ENCODE measurements at regions of chr3 and their contacts with region 1.

Region 1: GRCh38 chr3:79497447-79498111 is 270.2 kb downstream of the ROBO1 start:
- DNase-seq: no peak
- H3K4me3 ChIP-seq: no peak overlapping the region
- H3K27ac ChIP-seq: no peak overlapping the region
- H3K4me1 ChIP-seq: no peaks in the 10 kb centered on the region
- H3K27me3 ChIP-seq: no peaks in the 10 kb centered on the region
- CTCF ChIP-seq: peak; percentile 66 to 67

Region 2: DNA sequence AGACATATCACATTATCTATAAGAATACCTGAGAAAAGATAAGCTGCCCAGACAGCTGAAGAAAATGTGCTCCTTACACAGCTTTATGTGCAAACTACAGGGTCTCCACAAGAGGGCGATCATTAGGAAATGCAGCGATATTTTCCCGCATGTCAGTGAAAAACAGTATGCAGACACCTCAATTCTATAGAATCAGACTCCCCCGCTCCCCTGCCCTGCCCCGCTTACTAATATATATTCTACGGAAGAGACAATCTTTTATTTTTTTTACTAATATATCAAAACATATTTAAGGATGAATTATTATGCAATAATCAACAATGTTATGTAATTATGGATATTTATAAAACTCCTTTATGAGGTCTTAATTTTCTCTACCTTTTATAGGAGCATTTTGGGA is 411.1 kb before region 1 on chr3:
- CTCF ChIA-PET with region 1: no interaction called
- dilution Hi-C with region 1: no loop called
- in situ Hi-C with region 1: loop called (anchors 10 to 25 kb)
- intact Hi-C with region 1: loop called (anchors 1 kb)
- DNase-seq: peak; percentile 43
- H3K4me3 ChIP-seq: no peak overlapping the region
- H3K27ac ChIP-seq: no peak overlapping the region
- H3K4me1 ChIP-seq: no peaks in the 10 kb centered on the region
- H3K27me3 ChIP-seq: peaks cover 2% of the 10 kb centered on the region
- CTCF ChIP-seq: peak; percentile 85 to 88

Region 3: DNA sequence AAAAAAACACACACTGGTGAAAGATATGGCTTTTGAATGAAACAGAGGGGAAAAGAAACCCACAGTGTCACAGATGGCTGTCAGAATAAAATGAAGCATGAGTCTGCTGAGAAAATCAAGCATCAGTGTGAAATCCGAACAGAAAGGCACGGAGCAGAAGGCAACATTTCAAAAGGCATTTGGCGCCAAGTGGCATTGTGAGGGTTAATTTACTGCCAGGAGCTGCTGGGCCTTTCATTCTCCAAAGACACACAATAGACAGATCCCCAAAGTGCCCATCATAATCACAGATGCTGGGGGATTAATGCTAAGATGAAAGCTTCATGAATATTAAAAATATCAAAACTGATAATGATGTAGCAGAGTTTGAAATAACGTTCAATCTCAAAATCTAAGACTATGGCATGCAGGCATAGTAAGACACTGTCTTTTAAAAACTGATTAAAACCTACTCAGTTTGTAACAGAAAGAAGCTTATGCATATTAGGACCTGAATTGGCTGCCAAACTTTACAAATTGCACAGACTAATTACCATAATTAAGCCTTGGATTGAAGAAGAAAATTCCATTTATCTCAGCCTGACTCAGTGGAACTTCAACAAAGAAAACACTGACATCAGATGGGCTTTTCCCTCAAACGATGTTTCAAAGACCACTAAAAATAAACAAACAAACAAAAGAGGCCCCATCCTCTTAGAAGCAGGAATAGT is 319.0 kb before region 1 on chr3:
- CTCF ChIA-PET with region 1: no interaction called
- dilution Hi-C with region 1: no loop called
- in situ Hi-C with region 1: no loop called
- intact Hi-C with region 1: no loop called
- DNase-seq: no peak
- H3K4me3 ChIP-seq: no peak overlapping the region
- H3K27ac ChIP-seq: no peak overlapping the region
- H3K4me1 ChIP-seq: no peaks in the 10 kb centered on the region
- H3K27me3 ChIP-seq: no peaks in the 10 kb centered on the region
- CTCF ChIP-seq: no peak

Region 4: GRCh38 chr3:79361748-79362378 is 135.7 kb before region 1 on chr3:
- CTCF ChIA-PET with region 1: no interaction called
- dilution Hi-C with region 1: no loop called
- in situ Hi-C with region 1: no loop called
- intact Hi-C with region 1: loop called (anchors 2 kb)
- DNase-seq: peak; percentile 29
- H3K4me3 ChIP-seq: no peak overlapping the region
- H3K27ac ChIP-seq: no peak overlapping the region
- H3K4me1 ChIP-seq: peaks cover 3% of the 10 kb centered on the region
- H3K27me3 ChIP-seq: no peaks in the 10 kb centered on the region
- CTCF ChIP-seq: peak; percentile 69 to 75

Region 5: GRCh38 chr3:79406175-79406574 is 91.4 kb before region 1 on chr3:
- CTCF ChIA-PET with region 1: no interaction called
- dilution Hi-C with region 1: no loop called
- in situ Hi-C with region 1: no loop called
- intact Hi-C with region 1: loop called (anchors 1 kb)
- DNase-seq: no peak
- H3K4me3 ChIP-seq: no peak overlapping the region
- H3K27ac ChIP-seq: no peak overlapping the region
- H3K4me1 ChIP-seq: no peaks in the 10 kb centered on the region
- H3K27me3 ChIP-seq: no peaks in the 10 kb centered on the region
- CTCF ChIP-seq: peak; percentile 16 to 59

Measured in mammary epithelial cell (primary cell).